AG04450 (cell line): ENCODE measurements at regions of chr9 and their contacts with region 1.

Region 1: GRCh38 chr9:93119953-93120845 is 13.9 kb downstream of the NINJ1 start:
- DNase-seq: peak; percentile 85
- H3K4me3 ChIP-seq: no peak overlapping the region
- H3K27ac ChIP-seq: peak overlapping the region; percentile 42
- H3K27me3 ChIP-seq: no peaks in the 10 kb centered on the region
- CTCF ChIP-seq: peak; percentile 56

Region 2: GRCh38 chr9:93134015-93134739 is 14.0 kb after region 1 on chr9 and contains the start of gene NINJ1:
- CTCF ChIA-PET with region 1: interaction called, 7 read pairs
- POLR2A ChIA-PET with region 1: interaction called, 24 read pairs
- DNase-seq: no peak
- H3K4me3 ChIP-seq: peak within 1 kb of the TSS; percentile 77
- H3K27ac ChIP-seq: peak within 1 kb of the TSS; percentile 96
- H3K27me3 ChIP-seq: no peaks in the 10 kb centered on the region
- CTCF ChIP-seq: no peak
- polyA plus RNA-seq, gene NINJ1: 26.8 and 47.4 TPM in 2 replicates